KBM-7 (cell line): ENCODE measurements at regions of chr11 and their contacts with region 1.

Region 1: GRCh38 chr11:9972989-9973388 is 309.1 kb downstream of the SWAP70 start:
- DNase-seq: peak; percentile 71

Region 2: GRCh38 chr11:9757809-9758636 is 215.0 kb before region 1 on chr11:
- in situ Hi-C with region 1: loop called (anchors 25 kb)
- DNase-seq: peak; percentile 86